ENCODE measurements at regions of chrX and their contacts with region 1.

Region 1: GRCh38 chrX:94114362-94114761 is 440.4 kb downstream of the FAM133A start:
- DNase-seq: no peak
- H3K4me3 ChIP-seq: no peak overlapping the region
- H3K27ac ChIP-seq: no peak overlapping the region
- H3K4me1 ChIP-seq: no peaks in the 10 kb centered on the region
- H3K27me3 ChIP-seq: no peaks in the 10 kb centered on the region
- CTCF ChIP-seq: no peak

Region 2: DNA sequence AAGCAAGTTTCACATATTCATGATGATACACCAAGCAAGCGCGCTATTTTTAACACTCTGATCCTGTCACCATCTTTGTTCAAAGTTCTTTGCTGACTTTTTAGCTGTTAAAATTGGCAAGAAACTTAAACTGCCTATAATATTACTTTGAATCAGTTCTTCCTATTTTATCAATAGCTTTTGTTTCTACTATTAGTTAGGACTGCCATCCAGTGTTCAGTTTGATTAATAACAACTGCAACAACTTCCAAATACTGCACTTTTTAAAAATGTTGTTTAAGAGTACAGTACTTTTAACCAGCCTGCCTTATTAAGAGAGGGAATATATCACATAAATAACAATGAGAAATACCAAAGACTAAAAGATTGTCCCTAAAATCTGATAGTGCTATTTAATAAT is 174.0 kb after region 1 on chrX:
- CTCF ChIA-PET with region 1: no interaction called
- dilution Hi-C with region 1: no loop called
- in situ Hi-C with region 1: no loop called
- intact Hi-C with region 1: loop called (anchors 10 kb)
- DNase-seq: no peak
- H3K4me3 ChIP-seq: no peak overlapping the region
- H3K27ac ChIP-seq: no peak overlapping the region
- H3K4me1 ChIP-seq: no peaks in the 10 kb centered on the region
- H3K27me3 ChIP-seq: peaks cover 2% of the 10 kb centered on the region
- CTCF ChIP-seq: peak; percentile 24 to 42

Measured in mammary epithelial cell (primary cell).